Ascending aorta (tissue), 2 donors: ENCODE measurements at regions of chr7 and their contacts with region 1.

Region 1: GRCh38 chr7:18086165-18087030 is 58.8 kb upstream of the PRPS1L1 start:
- DNase-seq: peak in 1 of 2 donors; percentile 69
- H3K4me3 ChIP-seq: peak overlapping the region; percentile 86 to 96
- H3K27ac ChIP-seq: peak overlapping the region; percentile 57 to 63
- H3K4me1 ChIP-seq: peaks cover 0 to 4% of the 10 kb centered on the region in 2 donors
- H3K27me3 ChIP-seq: no peaks in the 10 kb centered on the region
- CTCF ChIP-seq: peak in 1 of 3 experiments; percentile 38

Region 2: GRCh38 chr7:17940302-17940883 is 146.0 kb before region 1 on chr7 and contains the start of gene SNX13:
- intact Hi-C with region 1: loop called (anchors 5 kb)
- DNase-seq: peak; percentile 74 to 95
- H3K4me3 ChIP-seq: peak within 1 kb of the TSS; percentile 85 to 98
- H3K27ac ChIP-seq: peak within 1 kb of the TSS; percentile 95 to 99
- H3K4me1 ChIP-seq: peaks cover 0 to 27% of the 10 kb centered on the region in 2 donors
- H3K27me3 ChIP-seq: no peaks in the 10 kb centered on the region
- CTCF ChIP-seq: peak in 2 of 3 experiments; percentile 21 to 35
- total RNA-seq, gene SNX13: 26.2 TPM

Region 3: DNA sequence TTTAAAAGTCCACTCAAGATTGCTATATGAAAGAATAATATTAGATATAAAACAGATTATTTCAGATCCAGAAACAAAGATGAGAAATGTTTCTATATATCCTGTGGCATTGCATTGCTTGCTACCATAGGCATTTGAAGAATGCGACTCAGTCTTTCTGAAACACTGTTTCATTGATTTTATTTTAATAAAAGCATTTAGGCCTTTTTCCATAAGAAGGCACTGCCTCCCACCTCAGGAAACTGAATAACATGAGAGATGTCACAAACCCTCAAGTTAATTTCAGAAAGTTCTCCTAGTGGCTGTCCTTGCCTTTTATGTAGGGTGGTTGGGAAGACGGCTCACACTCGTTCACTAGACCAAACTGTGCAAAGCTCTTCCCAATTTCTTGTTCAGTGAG is 82.0 kb before region 1 on chr7:
- intact Hi-C with region 1: no loop called
- DNase-seq: no peak
- H3K4me3 ChIP-seq: no peak overlapping the region
- H3K27ac ChIP-seq: no peak overlapping the region
- H3K4me1 ChIP-seq: no peaks in the 10 kb centered on the region
- H3K27me3 ChIP-seq: no peaks in the 10 kb centered on the region
- CTCF ChIP-seq: no peak

Region 4: DNA sequence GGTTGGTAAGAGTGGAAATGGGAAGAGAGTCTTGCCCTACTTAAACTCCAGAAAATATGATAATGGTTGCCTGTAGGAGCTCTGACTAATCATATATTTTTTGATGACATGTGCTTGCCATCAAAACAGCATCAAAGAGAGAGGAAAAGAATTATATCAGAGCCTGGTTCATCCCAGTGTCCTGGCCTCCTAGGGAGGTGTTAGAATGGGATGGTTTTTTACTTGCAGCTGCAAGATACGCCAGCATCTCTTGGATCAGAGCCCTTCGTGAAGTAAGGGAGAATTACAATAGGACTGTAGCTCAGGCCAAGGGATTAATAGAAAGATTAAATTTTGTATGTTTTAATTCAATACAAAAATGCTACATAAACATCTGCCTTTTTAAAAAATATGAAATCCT is 231.5 kb after region 1 on chr7:
- intact Hi-C with region 1: loop called (anchors 5 kb)
- DNase-seq: no peak
- H3K4me3 ChIP-seq: no peak overlapping the region
- H3K27ac ChIP-seq: no peak overlapping the region
- H3K4me1 ChIP-seq: no peaks in the 10 kb centered on the region
- H3K27me3 ChIP-seq: no peaks in the 10 kb centered on the region
- CTCF ChIP-seq: no peak